ENCODE measurements at regions of chr13 and their contacts with region 1.

Region 1: DNA sequence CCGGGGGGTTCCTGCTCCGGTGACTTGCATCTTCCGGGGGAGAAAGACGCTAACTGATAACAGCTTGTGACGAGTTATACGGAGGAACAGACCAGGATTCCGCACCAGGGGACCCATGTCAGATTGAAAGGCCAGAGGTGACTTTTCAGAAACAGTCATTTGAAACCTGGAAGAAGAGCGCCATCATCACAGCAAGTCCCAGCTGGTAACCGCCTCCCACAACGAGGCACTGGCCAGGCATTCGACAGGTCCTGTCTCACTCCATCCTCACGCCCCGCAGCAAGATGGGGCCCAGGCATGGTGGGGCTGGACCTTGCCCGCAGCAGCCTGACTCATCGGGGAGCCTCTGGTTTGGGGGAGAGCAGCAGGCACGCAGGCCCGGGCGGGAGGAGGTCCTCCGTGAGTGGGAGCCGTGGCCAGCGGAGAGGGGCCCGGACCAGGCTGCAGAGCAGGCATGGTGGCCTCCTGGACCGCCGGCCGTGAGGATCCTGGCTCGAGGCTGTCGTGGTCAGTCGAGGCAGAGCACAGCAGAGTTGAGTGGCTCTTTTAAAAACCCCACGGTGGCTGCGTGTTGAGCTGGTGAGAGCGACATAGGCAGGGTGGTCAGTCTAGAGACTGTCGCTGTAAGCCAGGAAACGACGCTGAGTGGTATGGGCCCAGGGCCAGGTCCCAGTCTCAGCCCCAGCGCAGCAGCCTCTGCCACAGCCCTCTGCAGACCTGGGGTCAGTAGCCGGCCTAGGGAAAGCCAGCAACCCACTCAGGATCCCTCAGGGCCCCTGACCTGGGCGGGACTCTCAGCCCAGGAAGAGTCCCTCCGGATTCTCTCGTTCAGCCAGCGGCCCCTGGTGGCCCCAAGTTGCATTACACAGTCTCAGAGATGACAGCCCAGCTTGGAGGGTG is 94.9 kb upstream of the MCF2L start:
- DNase-seq: peak; percentile 86
- ATAC-seq: peak; percentile 79
- H3K4me3 Mint-ChIP-seq: peak overlapping the region; percentile 0
- H3K27ac Mint-ChIP-seq: peak overlapping the region; percentile 82
- H3K4me1 Mint-ChIP-seq: peaks cover 16% of the 10 kb centered on the region
- H3K27me3 Mint-ChIP-seq: no peaks in the 10 kb centered on the region
- CTCF ChIP-seq: peak; percentile 90

Region 2: GRCh38 chr13:112638157-112638750 is 235.8 kb before region 1 on chr13:
- CTCF ChIA-PET with region 1: interaction called, 40 read pairs
- POLR2A ChIA-PET with region 1: interaction called, 5 read pairs
- intact Hi-C with region 1: loop called (anchors 10 kb)
- DNase-seq: no peak
- ATAC-seq: no peak
- H3K4me3 Mint-ChIP-seq: no peak overlapping the region
- H3K27ac Mint-ChIP-seq: no peak overlapping the region
- H3K4me1 Mint-ChIP-seq: peaks cover 5% of the 10 kb centered on the region
- H3K27me3 Mint-ChIP-seq: peaks cover 28% of the 10 kb centered on the region
- CTCF ChIP-seq: no peak

Region 3: GRCh38 chr13:112643759-112644459 is 230.2 kb before region 1 on chr13:
- CTCF ChIA-PET with region 1: interaction called, 40 read pairs
- POLR2A ChIA-PET with region 1: interaction called, 5 read pairs
- intact Hi-C with region 1: loop called (anchors 10 kb)
- DNase-seq: no peak
- ATAC-seq: no peak
- H3K4me3 Mint-ChIP-seq: no peak overlapping the region
- H3K27ac Mint-ChIP-seq: no peak overlapping the region
- H3K4me1 Mint-ChIP-seq: peaks cover 5% of the 10 kb centered on the region
- H3K27me3 Mint-ChIP-seq: peaks cover 16% of the 10 kb centered on the region
- CTCF ChIP-seq: no peak

Region 4: GRCh38 chr13:112790735-112791641 is 83.1 kb before region 1 on chr13:
- CTCF ChIA-PET with region 1: no interaction called
- POLR2A ChIA-PET with region 1: no interaction called
- intact Hi-C with region 1: no loop called
- DNase-seq: no peak
- ATAC-seq: no peak
- H3K4me3 Mint-ChIP-seq: no peak overlapping the region
- H3K27ac Mint-ChIP-seq: no peak overlapping the region
- H3K4me1 Mint-ChIP-seq: peaks cover 7% of the 10 kb centered on the region
- H3K27me3 Mint-ChIP-seq: no peaks in the 10 kb centered on the region
- CTCF ChIP-seq: no peak

Region 5: DNA sequence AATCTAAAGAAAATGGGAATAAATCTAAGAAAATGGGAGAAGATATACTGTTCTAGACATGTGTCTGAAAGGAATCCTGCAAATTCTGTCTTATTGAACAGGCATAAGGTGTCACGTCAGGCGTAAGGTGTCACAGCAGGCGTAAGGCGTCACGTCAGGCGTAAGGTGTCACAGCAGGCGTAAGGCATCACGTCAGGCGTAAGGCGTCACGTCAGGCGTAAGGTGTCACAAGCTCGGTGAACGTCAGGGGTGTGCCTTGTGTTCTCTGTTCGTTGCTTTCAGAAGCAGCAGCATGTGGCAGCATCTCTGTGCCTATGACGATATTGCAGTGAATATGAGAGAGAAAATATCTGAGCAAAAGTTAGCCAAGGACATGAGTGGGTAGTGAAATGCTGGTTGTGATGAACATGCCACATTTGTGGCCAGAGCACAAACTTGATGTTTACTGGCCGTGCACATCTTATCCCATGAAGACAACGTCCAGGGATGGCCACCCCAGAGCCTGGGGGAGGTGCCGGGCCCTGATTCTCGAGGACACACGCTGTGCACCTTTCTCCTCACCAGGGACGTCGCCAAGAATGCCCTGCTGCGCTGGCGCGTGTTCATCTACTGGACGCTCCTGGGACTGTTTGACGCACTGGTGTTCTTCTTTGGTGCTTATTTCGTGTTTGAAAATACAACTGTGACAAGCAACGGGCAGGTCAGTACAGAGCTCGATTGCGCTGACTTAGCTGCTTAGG is 12.1 kb before region 1 on chr13:
- CTCF ChIA-PET with region 1: no interaction called
- POLR2A ChIA-PET with region 1: no interaction called
- intact Hi-C with region 1: no loop called
- DNase-seq: no peak
- ATAC-seq: no peak
- H3K4me3 Mint-ChIP-seq: no peak overlapping the region
- H3K27ac Mint-ChIP-seq: no peak overlapping the region
- H3K4me1 Mint-ChIP-seq: no peaks in the 10 kb centered on the region
- H3K27me3 Mint-ChIP-seq: no peaks in the 10 kb centered on the region
- CTCF ChIP-seq: no peak

Measured in activated CD8-positive, alpha-beta T cell treated with anti-CD3 and anti-CD28 coated beads for 36 hours (primary cell).